ENCODE measurements at regions of chr2 and their contacts with region 1.

Region 1: GRCh38 chr2:42663106-42663780 is 94.8 kb downstream of the MTA3 start:
- DNase-seq: peak; percentile 52
- H3K4me3 ChIP-seq: no peak overlapping the region
- H3K27ac ChIP-seq: no peak overlapping the region
- H3K4me1 ChIP-seq: no peaks in the 10 kb centered on the region
- H3K27me3 ChIP-seq: no peaks in the 10 kb centered on the region
- CTCF ChIP-seq: peak; percentile 97

Region 2: GRCh38 chr2:42513257-42513918 is 149.9 kb before region 1 on chr2:
- intact Hi-C with region 1: loop called (anchors 5 kb)
- DNase-seq: peak; percentile 78
- H3K4me3 ChIP-seq: no peak overlapping the region
- H3K27ac ChIP-seq: no peak overlapping the region
- H3K4me1 ChIP-seq: no peaks in the 10 kb centered on the region
- H3K27me3 ChIP-seq: no peaks in the 10 kb centered on the region
- CTCF ChIP-seq: peak; percentile 65

Region 3: DNA sequence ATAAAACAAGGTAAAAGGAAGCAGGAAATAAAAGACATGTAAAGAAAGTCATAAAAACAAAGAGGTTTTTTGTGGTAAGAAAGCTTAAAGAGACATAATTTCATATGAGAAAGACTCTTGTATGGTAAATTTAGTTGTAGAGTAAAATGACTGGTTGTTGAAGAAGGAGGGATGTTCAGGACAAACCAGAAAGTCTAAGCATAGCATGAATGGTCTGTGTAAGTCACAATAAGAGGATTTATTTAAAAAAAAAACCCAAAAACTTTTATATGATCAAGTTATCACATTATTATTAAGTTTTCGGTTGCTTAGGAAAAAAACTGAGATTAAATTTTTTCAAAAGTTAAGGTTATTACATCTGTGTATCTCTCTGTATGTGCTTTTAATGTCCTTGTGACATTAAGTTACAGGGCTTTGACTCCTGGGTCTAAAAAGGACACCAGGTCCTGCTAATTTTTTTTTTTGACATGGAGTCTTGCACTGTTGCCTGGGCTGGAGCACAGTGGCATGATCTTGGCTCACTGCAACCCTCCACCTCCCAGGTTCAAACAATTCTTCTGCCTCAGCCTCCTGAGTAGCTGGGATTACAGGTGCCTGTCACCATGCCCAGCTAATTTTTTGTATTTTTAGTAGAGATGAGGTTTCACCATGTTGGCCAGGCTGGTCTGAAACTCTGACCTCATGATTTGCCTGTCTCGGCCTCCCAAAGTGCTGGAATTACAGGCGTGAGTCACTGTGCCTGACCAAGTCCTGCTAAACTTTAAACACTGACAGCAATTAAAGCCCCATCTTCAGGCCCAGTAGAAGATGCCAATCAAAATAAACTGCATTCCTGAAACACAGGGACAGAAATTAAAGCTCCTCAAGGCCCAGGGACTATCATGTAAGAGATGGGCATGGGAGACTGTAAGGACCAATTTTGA is 114.9 kb after region 1 on chr2:
- intact Hi-C with region 1: no loop called
- DNase-seq: peak; percentile 30
- H3K4me3 ChIP-seq: no peak overlapping the region
- H3K27ac ChIP-seq: no peak overlapping the region
- H3K4me1 ChIP-seq: no peaks in the 10 kb centered on the region
- H3K27me3 ChIP-seq: no peaks in the 10 kb centered on the region
- CTCF ChIP-seq: no peak